Activated CD4-positive, alpha-beta memory T cell treated with anti-CD3 and anti-CD28 coated beads, Interleukin-2, amount 10 ng/mL, durations not matched to agents 7 days and 5 days (primary cell): ENCODE measurements at regions of chr17 and their contacts with region 1.

Region 1: GRCh38 chr17:29931231-29931932 is 1.4 kb upstream of the SSH2 start:
- DNase-seq: peak; percentile 73
- H3K4me3 Mint-ChIP-seq: no peak overlapping the region
- H3K27ac Mint-ChIP-seq: no peak overlapping the region
- H3K4me1 Mint-ChIP-seq: peaks cover 23% of the 10 kb centered on the region
- H3K27me3 Mint-ChIP-seq: no peaks in the 10 kb centered on the region

Region 2: GRCh38 chr17:29640413-29640812 is 291.0 kb before region 1 on chr17:
- CTCF ChIA-PET with region 1: interaction called, 31 read pairs
- POLR2A ChIA-PET with region 1: interaction called, 11 read pairs
- DNase-seq: no peak
- H3K4me3 Mint-ChIP-seq: no peak overlapping the region
- H3K27ac Mint-ChIP-seq: no peak overlapping the region
- H3K4me1 Mint-ChIP-seq: peaks cover 19% of the 10 kb centered on the region
- H3K27me3 Mint-ChIP-seq: no peaks in the 10 kb centered on the region

Region 3: GRCh38 chr17:29760761-29761696 is 170.4 kb before region 1 on chr17:
- CTCF ChIA-PET with region 1: interaction called, 4 read pairs
- POLR2A ChIA-PET with region 1: interaction called, 14 read pairs
- DNase-seq: peak; percentile 95
- H3K4me3 Mint-ChIP-seq: peak overlapping the region; percentile 91
- H3K27ac Mint-ChIP-seq: peak overlapping the region; percentile 95
- H3K4me1 Mint-ChIP-seq: peaks cover 42% of the 10 kb centered on the region
- H3K27me3 Mint-ChIP-seq: no peaks in the 10 kb centered on the region

Region 4: GRCh38 chr17:29821897-29822296 is 109.5 kb before region 1 on chr17:
- CTCF ChIA-PET with region 1: interaction called, 21 read pairs
- POLR2A ChIA-PET with region 1: interaction called, 3 read pairs
- DNase-seq: no peak
- H3K4me3 Mint-ChIP-seq: no peak overlapping the region
- H3K27ac Mint-ChIP-seq: no peak overlapping the region
- H3K4me1 Mint-ChIP-seq: peaks cover 2% of the 10 kb centered on the region
- H3K27me3 Mint-ChIP-seq: no peaks in the 10 kb centered on the region

Region 5: DNA sequence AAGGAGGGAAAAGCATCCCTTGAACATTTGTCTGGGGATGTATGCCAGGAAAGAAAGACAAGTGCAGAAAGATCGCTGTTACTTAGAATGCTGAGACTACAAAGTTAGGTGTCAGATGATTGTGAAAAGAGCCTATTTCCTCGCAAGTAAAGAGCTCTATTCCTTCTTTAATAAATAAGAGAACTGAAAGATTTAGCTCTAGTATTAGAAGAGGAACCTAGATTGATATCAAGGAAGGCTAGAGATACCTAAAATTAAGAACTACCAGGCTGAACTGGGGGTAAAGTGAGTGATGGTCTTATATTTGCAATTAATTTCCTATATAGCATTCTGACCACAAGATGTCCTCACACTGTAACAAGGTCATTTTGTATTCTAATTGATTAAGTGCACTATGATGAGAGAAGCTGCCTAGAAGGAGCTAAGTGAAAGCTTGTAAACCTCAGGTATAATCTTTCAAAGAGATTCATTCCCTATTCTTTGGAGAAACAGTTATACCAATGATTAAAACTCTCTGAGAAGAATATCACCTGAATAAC is 63.7 kb before region 1 on chr17:
- CTCF ChIA-PET with region 1: interaction called, 27 read pairs
- POLR2A ChIA-PET with region 1: interaction called, 5 read pairs
- DNase-seq: no peak
- H3K4me3 Mint-ChIP-seq: no peak overlapping the region
- H3K27ac Mint-ChIP-seq: no peak overlapping the region
- H3K4me1 Mint-ChIP-seq: peaks cover 7% of the 10 kb centered on the region
- H3K27me3 Mint-ChIP-seq: no peaks in the 10 kb centered on the region

Region 6: DNA sequence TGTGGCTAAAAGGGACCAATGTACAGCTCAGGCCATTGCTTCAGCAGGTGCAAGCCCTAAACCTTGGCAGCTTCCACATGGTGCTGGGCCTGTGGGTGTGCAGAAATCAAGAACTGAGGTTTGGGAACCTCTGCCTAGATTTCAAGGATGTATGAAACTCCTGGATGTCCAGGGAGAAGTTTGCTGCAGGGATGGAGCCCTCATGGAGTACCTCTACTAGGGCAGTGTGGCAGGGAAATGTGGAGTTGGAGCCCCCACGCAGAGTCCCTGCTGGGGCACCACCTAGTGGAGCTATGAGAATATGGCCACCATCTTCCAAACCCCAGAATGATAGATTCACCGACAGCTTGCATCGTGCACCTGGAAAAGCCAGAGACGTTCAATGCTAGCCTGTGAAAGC is 23.0 kb after region 1 on chr17:
- CTCF ChIA-PET with region 1: interaction called, 13 read pairs
- POLR2A ChIA-PET with region 1: no interaction called
- DNase-seq: no peak
- H3K4me3 Mint-ChIP-seq: no peak overlapping the region
- H3K27ac Mint-ChIP-seq: no peak overlapping the region
- H3K4me1 Mint-ChIP-seq: no peaks in the 10 kb centered on the region
- H3K27me3 Mint-ChIP-seq: peaks cover 3% of the 10 kb centered on the region

Region 7: DNA sequence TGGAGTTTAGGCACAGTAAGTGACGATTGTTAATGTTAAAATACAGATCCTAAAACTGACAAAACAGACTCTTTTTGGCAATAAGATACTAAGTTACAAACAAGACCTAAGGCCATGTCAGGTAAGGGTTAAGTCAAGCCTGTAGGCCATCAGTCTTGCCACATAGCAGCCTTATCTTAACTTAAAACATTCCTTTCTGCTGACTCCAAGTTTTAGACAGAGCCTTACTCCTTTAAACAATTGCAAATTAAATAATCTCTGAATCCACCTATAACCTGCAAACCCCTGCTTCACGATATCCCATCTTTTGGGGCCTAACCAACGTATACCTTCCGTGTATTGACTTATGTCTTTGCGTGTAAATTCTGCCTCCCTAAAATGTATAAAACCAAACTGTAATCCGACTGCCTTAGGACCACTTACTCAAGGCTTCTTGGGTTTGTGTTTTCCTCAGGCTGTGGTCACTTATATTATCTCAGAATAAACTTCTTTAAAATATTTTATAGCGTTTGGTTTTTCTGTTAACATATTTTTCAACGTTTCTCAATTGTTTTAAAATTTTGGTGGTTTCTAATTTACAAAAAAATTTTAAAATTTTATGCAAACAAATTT is 74.4 kb after region 1 on chr17:
- CTCF ChIA-PET with region 1: no interaction called
- POLR2A ChIA-PET with region 1: no interaction called
- DNase-seq: no peak
- H3K4me3 Mint-ChIP-seq: no peak overlapping the region
- H3K27ac Mint-ChIP-seq: no peak overlapping the region
- H3K4me1 Mint-ChIP-seq: peaks cover 3% of the 10 kb centered on the region
- H3K27me3 Mint-ChIP-seq: peaks cover 9% of the 10 kb centered on the region

Region 8: DNA sequence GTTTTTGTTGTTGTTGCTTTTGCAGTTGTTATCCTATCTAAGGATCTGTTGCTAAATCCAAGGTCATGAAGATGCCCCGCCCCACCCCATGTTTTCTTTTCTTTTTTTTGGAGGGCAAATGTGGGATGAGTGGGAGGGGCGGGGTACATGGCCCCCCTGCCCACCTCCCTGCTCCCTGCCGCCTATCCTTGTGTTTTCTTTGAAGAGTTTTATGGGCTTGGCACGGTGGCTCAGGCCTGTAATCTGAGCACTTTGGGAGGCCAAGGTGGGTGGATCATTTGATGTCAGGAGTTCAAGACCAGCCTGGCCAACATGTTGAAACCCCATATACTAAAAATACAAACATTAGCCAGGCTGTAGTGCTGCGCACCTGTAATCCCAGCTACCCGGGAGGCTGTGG is 527.0 kb after region 1 on chr17:
- CTCF ChIA-PET with region 1: no interaction called
- POLR2A ChIA-PET with region 1: no interaction called
- DNase-seq: no peak
- H3K4me3 Mint-ChIP-seq: no peak overlapping the region
- H3K27ac Mint-ChIP-seq: no peak overlapping the region
- H3K4me1 Mint-ChIP-seq: no peaks in the 10 kb centered on the region
- H3K27me3 Mint-ChIP-seq: no peaks in the 10 kb centered on the region